HCT116 (cell line): ENCODE measurements at regions of chrX and their contacts with region 1.

Region 1: GRCh38 chrX:78029663-78030062 is 60.2 kb upstream of the PGAM4 start:
- DNase-seq: no peak
- ATAC-seq: peak; percentile 72
- H3K4me3 ChIP-seq: no peak overlapping the region
- H3K27ac ChIP-seq: no peak overlapping the region
- H3K4me1 ChIP-seq: peaks cover under 1 to 3% of the 10 kb centered on the region in 2 experiments; a peak in 2 of 4 replicates
- H3K27me3 ChIP-seq: no peaks in the 10 kb centered on the region
- CTCF ChIP-seq: peak; percentile 46 to 63 (median 51); a peak in 4 of 6 replicates
- POLR2A ChIP-seq: no peak
- RAD21 ChIP-seq: peak; percentile 78

Region 2: GRCh38 chrX:76555814-76556213 is 1473.8 kb before region 1 on chrX:
- CTCF ChIA-PET with region 1: interaction called, 3 read pairs
- POLR2A ChIA-PET with region 1: no interaction called
- RAD21 ChIA-PET with region 1: no interaction called
- intact Hi-C with region 1: loop called (anchors 5 kb)
- DNase-seq: peak; percentile 33
- ATAC-seq: peak; percentile 53; the same call in 1 of the 2 replicates
- H3K4me3 ChIP-seq: no peak overlapping the region
- H3K27ac ChIP-seq: no peak overlapping the region
- H3K4me1 ChIP-seq: no peaks in the 10 kb centered on the region
- H3K27me3 ChIP-seq: no peaks in the 10 kb centered on the region
- CTCF ChIP-seq: peak; percentile 10 to 38 (median 32); a peak in 3 of 6 replicates
- POLR2A ChIP-seq: no peak
- RAD21 ChIP-seq: peak; percentile 52

Region 3: DNA sequence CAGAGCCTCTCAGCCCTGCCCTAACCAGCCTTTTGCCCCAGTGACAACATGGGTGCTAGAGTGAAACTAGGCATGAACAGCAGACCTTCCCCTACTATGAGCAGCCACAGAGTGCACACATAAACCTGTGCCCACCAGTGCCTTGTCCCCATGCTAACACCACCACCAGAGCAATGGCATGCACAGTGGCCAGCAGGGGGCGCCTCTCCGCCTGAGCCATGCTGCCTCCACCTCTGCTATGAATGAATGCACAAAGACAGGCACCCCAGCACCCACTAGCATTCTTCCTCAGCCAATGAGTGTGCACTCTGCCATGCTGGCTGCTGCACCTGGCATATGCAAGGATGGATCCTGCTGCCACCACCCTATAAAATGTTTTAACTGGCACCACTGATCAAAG is 869.4 kb before region 1 on chrX:
- CTCF ChIA-PET with region 1: no interaction called
- POLR2A ChIA-PET with region 1: no interaction called
- RAD21 ChIA-PET with region 1: no interaction called
- intact Hi-C with region 1: loop called (anchors 5 kb)
- DNase-seq: no peak
- ATAC-seq: peak; percentile 76
- H3K4me3 ChIP-seq: no peak overlapping the region
- H3K27ac ChIP-seq: no peak overlapping the region
- H3K4me1 ChIP-seq: no peaks in the 10 kb centered on the region
- H3K27me3 ChIP-seq: no peaks in the 10 kb centered on the region
- CTCF ChIP-seq: peak in 2 of 3 experiments; percentile 59 to 60; a peak in 4 of 6 replicates
- POLR2A ChIP-seq: no peak
- RAD21 ChIP-seq: peak; percentile 33

Region 4: GRCh38 chrX:77640702-77641101 is 389.0 kb before region 1 on chrX:
- CTCF ChIA-PET with region 1: no interaction called
- POLR2A ChIA-PET with region 1: no interaction called
- RAD21 ChIA-PET with region 1: interaction called in 1 of 2 experiments, 11 read pairs
- intact Hi-C with region 1: no loop called
- DNase-seq: no peak
- ATAC-seq: no peak
- H3K4me3 ChIP-seq: no peak overlapping the region
- H3K27ac ChIP-seq: no peak overlapping the region
- H3K4me1 ChIP-seq: no peaks in the 10 kb centered on the region
- H3K27me3 ChIP-seq: no peaks in the 10 kb centered on the region
- CTCF ChIP-seq: no peak
- POLR2A ChIP-seq: no peak
- RAD21 ChIP-seq: no peak

Region 5: DNA sequence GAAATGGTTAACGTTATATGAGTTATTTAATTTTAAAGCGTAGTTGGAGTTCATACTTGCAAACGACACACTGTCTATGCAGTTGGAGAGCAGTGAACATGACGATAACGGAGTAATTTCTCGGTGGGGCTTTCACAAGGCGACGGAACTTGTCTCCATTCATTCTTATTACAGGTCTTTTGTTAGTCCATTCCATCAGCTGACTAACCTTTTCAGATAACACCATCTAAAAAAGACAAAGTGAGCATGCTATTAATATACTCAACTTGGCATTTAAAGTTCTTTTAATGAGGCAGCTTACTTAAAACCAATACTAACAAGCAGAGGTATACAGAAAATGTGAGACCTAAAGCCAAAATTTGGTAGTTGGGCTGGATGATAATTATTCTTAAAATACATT is 154.3 kb before region 1 on chrX:
- CTCF ChIA-PET with region 1: no interaction called
- POLR2A ChIA-PET with region 1: no interaction called
- RAD21 ChIA-PET with region 1: no interaction called
- intact Hi-C with region 1: no loop called
- DNase-seq: no peak
- ATAC-seq: no peak
- H3K4me3 ChIP-seq: no peak overlapping the region
- H3K27ac ChIP-seq: no peak overlapping the region
- H3K4me1 ChIP-seq: no peaks in the 10 kb centered on the region
- H3K27me3 ChIP-seq: no peaks in the 10 kb centered on the region
- CTCF ChIP-seq: no peak
- POLR2A ChIP-seq: no peak
- RAD21 ChIP-seq: no peak

Region 6: GRCh38 chrX:77967631-77968030 is 62.0 kb before region 1 on chrX:
- CTCF ChIA-PET with region 1: no interaction called
- POLR2A ChIA-PET with region 1: no interaction called
- RAD21 ChIA-PET with region 1: no interaction called
- intact Hi-C with region 1: no loop called
- DNase-seq: no peak
- ATAC-seq: no peak
- H3K4me3 ChIP-seq: no peak overlapping the region
- H3K27ac ChIP-seq: no peak overlapping the region
- H3K4me1 ChIP-seq: no peaks in the 10 kb centered on the region
- H3K27me3 ChIP-seq: no peaks in the 10 kb centered on the region
- CTCF ChIP-seq: no peak
- POLR2A ChIP-seq: no peak
- RAD21 ChIP-seq: no peak